ENCODE measurements at regions of chr17 and their contacts with region 1.

Region 1: DNA sequence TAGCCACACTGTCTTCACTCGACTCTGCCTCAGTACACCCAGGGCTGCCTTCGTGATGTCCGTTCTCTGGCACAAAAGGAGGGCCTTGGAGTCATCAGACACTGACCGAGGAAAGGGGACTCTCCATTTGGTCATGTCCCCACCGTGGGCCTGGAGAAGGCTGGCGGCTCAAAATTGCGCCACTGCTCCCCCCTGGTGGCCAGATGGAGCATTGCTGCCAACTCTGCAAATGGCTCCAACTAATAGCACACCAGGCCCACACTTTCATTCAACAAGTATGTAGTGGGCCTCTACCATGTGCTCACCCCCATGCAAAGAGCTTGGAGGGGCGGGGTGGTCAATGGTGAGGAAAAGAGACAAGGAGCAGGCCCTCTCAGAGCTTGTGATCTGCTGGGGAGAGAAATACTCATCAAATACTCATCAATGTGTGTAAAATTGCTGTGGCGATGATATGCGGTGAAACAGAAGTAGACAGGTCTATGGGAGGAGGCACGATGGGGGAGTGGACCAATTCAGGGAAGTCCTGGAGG is 5.2 kb upstream of the GRIN2C start:
- DNase-seq: peak; percentile 52 to 68 (median 62)
- H3K4me3 ChIP-seq: no peak overlapping the region
- H3K4me3 Mint-ChIP-seq: peak overlapping the region in 1 of 8 donors; percentile 65
- H3K27ac ChIP-seq: no peak overlapping the region
- H3K27ac Mint-ChIP-seq: peak overlapping the region in 2 of 7 donors; percentile 6 to 68
- H3K4me1 ChIP-seq: peaks cover 23% of the 10 kb centered on the region
- H3K4me1 Mint-ChIP-seq: peaks cover 12 to 20% (median 15%) of the 10 kb centered on the region in 4 donors
- H3K27me3 ChIP-seq: peaks cover 11% of the 10 kb centered on the region
- H3K27me3 Mint-ChIP-seq: peaks cover 1 to 7% of the 10 kb centered on the region in 2 donors

Region 2: GRCh38 chr17:74798239-74798707 is 66.7 kb before region 1 on chr17:
- CTCF ChIA-PET with region 1: interaction called, 127 read pairs
- POLR2A ChIA-PET with region 1: no interaction called
- intact Hi-C with region 1: no loop called
- DNase-seq: no peak
- H3K4me3 ChIP-seq: no peak overlapping the region
- H3K4me3 Mint-ChIP-seq: no peak overlapping the region
- H3K27ac ChIP-seq: no peak overlapping the region
- H3K27ac Mint-ChIP-seq: peak overlapping the region in 1 of 7 donors; percentile 66
- H3K4me1 ChIP-seq: no peaks in the 10 kb centered on the region
- H3K4me1 Mint-ChIP-seq: peaks cover 0 to 2% (median under 1%) of the 10 kb centered on the region in 4 donors
- H3K27me3 ChIP-seq: no peaks in the 10 kb centered on the region
- H3K27me3 Mint-ChIP-seq: no peaks in the 10 kb centered on the region

Region 3: DNA sequence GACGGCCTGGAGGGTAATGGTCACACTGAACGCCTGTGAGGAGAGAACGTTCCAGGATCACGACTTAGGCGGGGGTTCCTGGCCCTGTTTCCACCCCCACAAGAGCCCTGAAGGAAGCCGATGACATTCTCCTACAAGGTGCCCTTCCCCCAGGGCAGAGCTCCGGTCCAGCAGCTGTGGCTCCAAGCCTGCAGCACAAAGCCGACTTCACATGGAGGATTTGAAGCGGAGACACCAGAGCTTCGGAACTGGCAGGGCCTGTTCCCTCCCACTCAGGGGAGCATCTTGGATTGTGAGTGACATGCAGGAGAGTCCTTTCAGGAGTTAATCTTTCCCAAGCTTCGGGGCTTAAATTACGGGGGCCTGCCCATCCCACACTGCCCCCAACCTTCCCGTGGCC is 23.5 kb after region 1 on chr17:
- CTCF ChIA-PET with region 1: no interaction called
- POLR2A ChIA-PET with region 1: no interaction called
- intact Hi-C with region 1: no loop called
- DNase-seq: no peak
- H3K4me3 ChIP-seq: no peak overlapping the region
- H3K4me3 Mint-ChIP-seq: no peak overlapping the region
- H3K27ac ChIP-seq: no peak overlapping the region
- H3K27ac Mint-ChIP-seq: no peak overlapping the region
- H3K4me1 ChIP-seq: no peaks in the 10 kb centered on the region
- H3K4me1 Mint-ChIP-seq: no peaks in the 10 kb centered on the region
- H3K27me3 ChIP-seq: no peaks in the 10 kb centered on the region
- H3K27me3 Mint-ChIP-seq: peaks cover 17 to 22% of the 10 kb centered on the region in 2 donors

Region 4: GRCh38 chr17:75105618-75106384 is 240.9 kb after region 1 on chr17:
- CTCF ChIA-PET with region 1: no interaction called
- POLR2A ChIA-PET with region 1: no interaction called
- intact Hi-C with region 1: no loop called
- DNase-seq: no peak
- H3K4me3 ChIP-seq: no peak overlapping the region
- H3K4me3 Mint-ChIP-seq: no peak overlapping the region
- H3K27ac ChIP-seq: no peak overlapping the region
- H3K27ac Mint-ChIP-seq: peak overlapping the region in 1 of 7 donors; percentile 77
- H3K4me1 ChIP-seq: peaks cover 15% of the 10 kb centered on the region
- H3K4me1 Mint-ChIP-seq: peaks cover 7 to 16% (median 12%) of the 10 kb centered on the region in 4 donors
- H3K27me3 ChIP-seq: no peaks in the 10 kb centered on the region
- H3K27me3 Mint-ChIP-seq: no peaks in the 10 kb centered on the region

Region 5: GRCh38 chr17:75271233-75271954 is 406.5 kb after region 1 on chr17:
- CTCF ChIA-PET with region 1: no interaction called
- POLR2A ChIA-PET with region 1: no interaction called
- intact Hi-C with region 1: no loop called
- DNase-seq: peak; percentile 86 to 94 (median 88)
- H3K4me3 ChIP-seq: peak overlapping the region; percentile 42 to 82
- H3K4me3 Mint-ChIP-seq: peak overlapping the region; percentile 80 to 91 (median 84)
- H3K27ac ChIP-seq: peak overlapping the region; percentile 89
- H3K27ac Mint-ChIP-seq: peak overlapping the region; percentile 25 to 94 (median 88)
- H3K4me1 ChIP-seq: peaks cover 27% of the 10 kb centered on the region
- H3K4me1 Mint-ChIP-seq: peaks cover 10 to 35% (median 22%) of the 10 kb centered on the region in 4 donors
- H3K27me3 ChIP-seq: no peaks in the 10 kb centered on the region
- H3K27me3 Mint-ChIP-seq: no peaks in the 10 kb centered on the region

Measured in CD4-positive, alpha-beta memory T cell (primary cell).